Activated naive CD4-positive, alpha-beta T cell treated with anti-CD3 and anti-CD28 coated beads for 36 hours (primary cell): ENCODE measurements at regions of chr2 and their contacts with region 1.

Region 1: GRCh38 chr2:30421604-30422443 is 25.2 kb upstream of the LCLAT1 start:
- DNase-seq: peak; percentile 37
- H3K4me3 Mint-ChIP-seq: peak overlapping the region; percentile 74
- H3K27ac Mint-ChIP-seq: peak overlapping the region; percentile 94
- H3K4me1 Mint-ChIP-seq: peaks cover 54% of the 10 kb centered on the region
- H3K27me3 Mint-ChIP-seq: no peaks in the 10 kb centered on the region

Region 2: GRCh38 chr2:30208452-30208851 is 213.4 kb before region 1 on chr2:
- CTCF ChIA-PET with region 1: interaction called, 10 read pairs
- intact Hi-C with region 1: no loop called
- DNase-seq: peak; percentile 51
- H3K4me3 Mint-ChIP-seq: no peak overlapping the region
- H3K27ac Mint-ChIP-seq: no peak overlapping the region
- H3K4me1 Mint-ChIP-seq: peaks cover 15% of the 10 kb centered on the region
- H3K27me3 Mint-ChIP-seq: no peaks in the 10 kb centered on the region

Region 3: GRCh38 chr2:30239308-30239985 is 182.4 kb before region 1 on chr2:
- CTCF ChIA-PET with region 1: interaction called, 7 read pairs
- intact Hi-C with region 1: loop called (anchors 1 kb)
- DNase-seq: peak; percentile 86
- H3K4me3 Mint-ChIP-seq: peak overlapping the region; percentile 45
- H3K27ac Mint-ChIP-seq: peak overlapping the region; percentile 79
- H3K4me1 Mint-ChIP-seq: peaks cover 93% of the 10 kb centered on the region
- H3K27me3 Mint-ChIP-seq: no peaks in the 10 kb centered on the region

Region 4: GRCh38 chr2:30273261-30273861 is 148.5 kb before region 1 on chr2:
- CTCF ChIA-PET with region 1: no interaction called
- intact Hi-C with region 1: loop called (anchors 1 kb)
- DNase-seq: peak; percentile 60
- H3K4me3 Mint-ChIP-seq: no peak overlapping the region
- H3K27ac Mint-ChIP-seq: peak overlapping the region; percentile 68
- H3K4me1 Mint-ChIP-seq: peaks cover 78% of the 10 kb centered on the region
- H3K27me3 Mint-ChIP-seq: no peaks in the 10 kb centered on the region

Region 5: GRCh38 chr2:30439879-30440278 is 18.1 kb after region 1 on chr2:
- CTCF ChIA-PET with region 1: interaction called, 3 read pairs
- intact Hi-C with region 1: loop called (anchors 1 kb)
- DNase-seq: peak; percentile 79
- H3K4me3 Mint-ChIP-seq: no peak overlapping the region
- H3K27ac Mint-ChIP-seq: peak overlapping the region; percentile 79
- H3K4me1 Mint-ChIP-seq: peaks cover 41% of the 10 kb centered on the region
- H3K27me3 Mint-ChIP-seq: no peaks in the 10 kb centered on the region